ENCODE measurements at regions of chr10 and their contacts with region 1.

Region 1: GRCh38 chr10:45000752-45001380 is at the start of gene ZNF22:
- DNase-seq: peak; percentile 65
- H3K4me3 Mint-ChIP-seq: peak within 1 kb of the TSS; percentile 83
- H3K27ac Mint-ChIP-seq: peak within 1 kb of the TSS; percentile 79
- H3K4me1 Mint-ChIP-seq: peaks cover 26% of the 10 kb centered on the region
- H3K27me3 Mint-ChIP-seq: no peaks in the 10 kb centered on the region
- total RNA-seq, gene ZNF22: 18.7 to 19.5 TPM

Region 2: DNA sequence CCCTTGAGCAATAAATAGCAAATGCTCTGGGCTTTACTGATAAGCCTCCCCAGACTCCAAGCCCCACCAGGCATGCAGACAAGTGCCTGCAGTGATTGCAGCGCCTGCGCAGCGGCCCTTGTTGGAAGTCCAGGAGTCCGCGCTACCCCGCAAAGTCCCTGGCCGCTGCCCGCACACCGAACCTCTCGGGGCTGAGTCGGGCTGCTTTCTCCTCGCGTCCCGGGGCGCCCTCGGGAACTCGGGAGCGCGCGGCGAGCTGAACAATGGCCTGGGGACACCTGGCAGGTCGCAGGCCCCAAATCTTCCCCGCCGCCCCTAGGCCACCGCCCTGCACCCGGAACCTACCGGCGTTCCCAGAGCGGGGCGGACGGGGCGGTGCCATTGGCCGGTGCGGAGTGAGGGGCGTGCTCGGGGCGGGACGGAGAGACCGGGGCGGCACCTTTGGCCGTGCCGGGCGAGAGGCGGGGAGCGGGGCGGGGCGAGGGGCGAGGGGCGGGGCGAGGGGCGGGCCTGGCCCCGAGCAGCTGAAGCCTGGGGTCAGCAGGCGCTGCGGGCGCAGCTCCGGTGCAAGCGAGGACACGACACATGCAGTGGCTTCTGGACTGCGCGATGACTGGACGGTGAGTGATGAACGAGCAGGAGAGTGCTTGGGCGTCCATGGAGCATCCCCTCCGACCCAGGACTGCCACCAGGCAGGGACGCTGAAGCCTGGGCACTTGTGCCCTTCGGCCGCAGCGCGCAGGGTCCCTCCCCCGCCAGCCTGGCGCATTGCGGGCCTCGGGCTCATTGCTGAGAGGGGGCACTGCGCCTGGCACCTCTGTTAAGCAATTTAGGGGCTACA is 41.4 kb before region 1 on chr10 and contains the start of gene RASSF4:
- CTCF ChIA-PET with region 1: interaction called, 4 read pairs
- intact Hi-C with region 1: loop called (anchors 2 kb)
- DNase-seq: peak; percentile 94
- H3K4me3 Mint-ChIP-seq: peak within 1 kb of the TSS; percentile 80
- H3K27ac Mint-ChIP-seq: peak within 1 kb of the TSS; percentile 48
- H3K4me1 Mint-ChIP-seq: peaks cover 18% of the 10 kb centered on the region
- H3K27me3 Mint-ChIP-seq: no peaks in the 10 kb centered on the region
- total RNA-seq, gene RASSF4: 1.1 to 2.2 TPM

Region 3: GRCh38 chr10:45015590-45015989 is 14.7 kb after region 1 on chr10:
- CTCF ChIA-PET with region 1: no interaction called
- intact Hi-C with region 1: no loop called
- DNase-seq: no peak
- H3K4me3 Mint-ChIP-seq: no peak overlapping the region
- H3K27ac Mint-ChIP-seq: no peak overlapping the region
- H3K4me1 Mint-ChIP-seq: no peaks in the 10 kb centered on the region
- H3K27me3 Mint-ChIP-seq: peaks cover 3% of the 10 kb centered on the region